Activated B cell treated with CpG ODN at 0.5 μM for 24 hours (primary cell): ENCODE measurements at regions of chrX and their contacts with region 1.

Region 1: DNA sequence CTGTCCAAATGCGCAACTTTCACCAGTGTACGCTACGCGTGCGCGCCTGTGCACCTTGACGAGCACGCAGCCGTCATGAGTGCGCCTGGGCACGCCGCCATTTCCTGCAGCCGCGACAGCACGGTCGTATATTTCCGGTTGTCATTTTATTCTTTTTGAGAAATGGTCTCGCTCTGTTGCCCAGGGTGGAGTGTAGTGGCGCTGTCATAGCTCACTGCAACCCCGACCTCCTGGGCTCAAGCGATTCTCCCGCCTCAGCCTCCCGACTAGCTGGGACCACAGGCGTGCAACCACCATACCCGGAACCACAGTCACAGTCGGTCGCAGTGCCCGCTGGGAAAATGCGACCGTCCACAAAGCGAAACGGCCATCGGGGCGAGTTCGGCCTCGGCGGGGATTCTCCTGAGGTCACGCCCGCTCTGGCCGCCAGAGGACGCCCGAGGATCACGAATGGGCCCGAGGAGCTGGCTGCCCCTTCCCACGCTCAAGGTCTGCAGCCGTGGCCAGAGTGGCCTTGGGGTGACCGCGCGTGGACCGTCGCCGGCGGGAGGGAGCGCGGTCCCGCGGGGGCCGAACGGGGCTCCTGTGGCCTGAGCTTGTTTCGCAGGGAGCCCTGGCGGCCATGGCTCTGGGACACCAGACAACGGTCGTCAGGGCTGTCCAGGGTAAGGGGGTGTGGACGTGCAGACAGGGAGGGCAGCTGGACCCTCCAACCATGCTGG is 23.7 kb upstream of the PNMA3 start:
- DNase-seq: peak; percentile 70
- ATAC-seq: peak; percentile 87
- H3K4me3 Mint-ChIP-seq: peak overlapping the region; percentile 89
- H3K27ac Mint-ChIP-seq: peak overlapping the region; percentile 92
- H3K4me1 Mint-ChIP-seq: peaks cover 2% of the 10 kb centered on the region
- H3K27me3 Mint-ChIP-seq: no peaks in the 10 kb centered on the region
- CTCF ChIP-seq: no peak

Region 2: DNA sequence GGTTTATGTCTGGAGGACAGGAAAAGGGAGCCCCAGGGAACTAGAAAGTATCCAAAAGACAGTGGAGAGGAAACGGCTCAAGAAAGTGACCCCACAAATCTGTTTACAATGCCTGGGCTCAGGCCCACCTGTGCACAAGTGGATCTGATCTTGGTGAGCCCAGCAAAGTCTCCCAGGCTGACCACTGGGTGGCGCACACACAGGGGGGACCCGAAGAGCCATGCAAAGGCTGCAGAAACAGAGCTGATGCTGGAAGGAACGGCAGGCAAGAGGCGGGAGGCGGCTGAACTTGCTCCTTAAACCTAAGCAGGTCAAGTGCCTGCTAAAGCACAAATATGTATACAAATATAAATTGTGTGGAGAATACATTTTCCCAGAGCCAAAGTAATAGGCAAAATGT is 428.3 kb after region 1 on chrX:
- CTCF ChIA-PET with region 1: interaction called, 4 read pairs
- POLR2A ChIA-PET with region 1: no interaction called
- intact Hi-C with region 1: loop called (anchors 1 kb)
- DNase-seq: no peak
- ATAC-seq: peak; percentile 62
- H3K4me3 Mint-ChIP-seq: no peak overlapping the region
- H3K27ac Mint-ChIP-seq: no peak overlapping the region
- H3K4me1 Mint-ChIP-seq: no peaks in the 10 kb centered on the region
- H3K27me3 Mint-ChIP-seq: no peaks in the 10 kb centered on the region
- CTCF ChIP-seq: no peak

Region 3: GRCh38 chrX:153507484-153508178 is 475.1 kb after region 1 on chrX:
- CTCF ChIA-PET with region 1: interaction called, 9 read pairs
- POLR2A ChIA-PET with region 1: interaction called, 6 read pairs
- intact Hi-C with region 1: loop called (anchors 1 kb)
- DNase-seq: peak; percentile 68
- ATAC-seq: peak; percentile 99
- H3K4me3 Mint-ChIP-seq: no peak overlapping the region
- H3K27ac Mint-ChIP-seq: no peak overlapping the region
- H3K4me1 Mint-ChIP-seq: no peaks in the 10 kb centered on the region
- H3K27me3 Mint-ChIP-seq: no peaks in the 10 kb centered on the region
- CTCF ChIP-seq: no peak

Region 4: GRCh38 chrX:153667956-153668396 is 635.4 kb after region 1 on chrX:
- CTCF ChIA-PET with region 1: no interaction called
- POLR2A ChIA-PET with region 1: no interaction called
- intact Hi-C with region 1: loop called (anchors 1 kb)
- DNase-seq: peak; percentile 66
- ATAC-seq: peak; percentile 90
- H3K4me3 Mint-ChIP-seq: peak overlapping the region; percentile 68
- H3K27ac Mint-ChIP-seq: no peak overlapping the region
- H3K4me1 Mint-ChIP-seq: peaks cover 5% of the 10 kb centered on the region
- H3K27me3 Mint-ChIP-seq: peaks cover 7% of the 10 kb centered on the region
- CTCF ChIP-seq: no peak